ENCODE measurements at regions of chr11 and their contacts with region 1.

Region 1: DNA sequence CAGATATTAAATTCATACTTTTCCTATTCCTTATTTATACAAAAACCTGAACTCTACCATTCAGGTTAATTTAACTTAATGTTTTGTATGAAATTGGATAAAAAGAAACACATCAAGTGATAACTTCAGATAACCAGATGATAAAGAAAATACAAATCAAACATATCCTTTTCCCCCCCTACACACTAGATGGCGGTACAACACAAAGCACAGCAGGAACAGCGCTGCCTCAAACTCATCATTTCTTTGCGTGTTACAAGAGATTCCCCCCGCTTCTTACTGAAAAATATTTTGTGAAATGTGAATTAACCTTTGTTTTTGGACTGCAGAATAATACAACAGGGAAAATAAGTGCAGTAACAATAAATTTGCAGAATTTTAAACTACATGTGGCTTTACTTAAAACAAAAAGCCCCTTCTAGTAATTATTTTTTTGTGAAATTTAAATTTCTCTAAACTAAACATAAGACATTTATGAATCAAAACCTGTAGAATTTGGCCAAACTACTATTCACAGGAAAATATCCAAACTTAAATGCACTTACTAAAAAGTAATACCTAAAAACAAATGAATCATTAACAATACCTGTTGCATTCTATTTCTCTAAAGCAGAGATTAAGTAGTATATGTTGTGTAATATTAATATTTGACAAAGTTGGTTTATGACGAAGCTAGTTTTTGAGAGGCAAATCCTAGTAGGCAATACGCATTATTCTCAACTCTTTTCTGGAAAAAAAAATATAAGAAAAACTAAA is 74.4 kb downstream of the ARHGAP32 start:
- DNase-seq: peak; percentile 73
- ATAC-seq: peak; percentile 86
- H3K4me3 ChIP-seq: no peak overlapping the region
- H3K27ac ChIP-seq: peak overlapping the region; percentile 71
- H3K4me1 ChIP-seq: peaks cover 41% of the 10 kb centered on the region
- H3K27me3 ChIP-seq: no peaks in the 10 kb centered on the region
- CTCF ChIP-seq: peak; percentile 90; the same call in 1 of the 2 replicates

Region 2: GRCh38 chr11:128884703-128885338 is 233.0 kb before region 1 on chr11:
- CTCF ChIA-PET with region 1: no interaction called
- POLR2A ChIA-PET with region 1: no interaction called
- in situ Hi-C with region 1: no loop called
- intact Hi-C with region 1: loop called (anchors 10 kb)
- DNase-seq: peak; percentile 69
- ATAC-seq: peak; percentile 90
- H3K4me3 ChIP-seq: no peak overlapping the region
- H3K27ac ChIP-seq: no peak overlapping the region
- H3K4me1 ChIP-seq: no peaks in the 10 kb centered on the region
- H3K27me3 ChIP-seq: peaks cover 25% of the 10 kb centered on the region
- CTCF ChIP-seq: peak; percentile 93

Region 3: GRCh38 chr11:129192156-129192555 is 74.4 kb after region 1 on chr11 and contains the start of gene ARHGAP32:
- CTCF ChIA-PET with region 1: no interaction called
- POLR2A ChIA-PET with region 1: no interaction called
- in situ Hi-C with region 1: no loop called
- intact Hi-C with region 1: loop called (anchors 5 kb)
- DNase-seq: peak; percentile 61
- ATAC-seq: peak; percentile 94
- H3K4me3 ChIP-seq: peak within 1 kb of the TSS; percentile 22 to 62
- H3K27ac ChIP-seq: peak within 1 kb of the TSS; percentile 93
- H3K4me1 ChIP-seq: peaks cover 47% of the 10 kb centered on the region
- H3K27me3 ChIP-seq: no peaks in the 10 kb centered on the region
- CTCF ChIP-seq: no peak
- total RNA-seq, gene ARHGAP32: 44.6 TPM

Region 4: DNA sequence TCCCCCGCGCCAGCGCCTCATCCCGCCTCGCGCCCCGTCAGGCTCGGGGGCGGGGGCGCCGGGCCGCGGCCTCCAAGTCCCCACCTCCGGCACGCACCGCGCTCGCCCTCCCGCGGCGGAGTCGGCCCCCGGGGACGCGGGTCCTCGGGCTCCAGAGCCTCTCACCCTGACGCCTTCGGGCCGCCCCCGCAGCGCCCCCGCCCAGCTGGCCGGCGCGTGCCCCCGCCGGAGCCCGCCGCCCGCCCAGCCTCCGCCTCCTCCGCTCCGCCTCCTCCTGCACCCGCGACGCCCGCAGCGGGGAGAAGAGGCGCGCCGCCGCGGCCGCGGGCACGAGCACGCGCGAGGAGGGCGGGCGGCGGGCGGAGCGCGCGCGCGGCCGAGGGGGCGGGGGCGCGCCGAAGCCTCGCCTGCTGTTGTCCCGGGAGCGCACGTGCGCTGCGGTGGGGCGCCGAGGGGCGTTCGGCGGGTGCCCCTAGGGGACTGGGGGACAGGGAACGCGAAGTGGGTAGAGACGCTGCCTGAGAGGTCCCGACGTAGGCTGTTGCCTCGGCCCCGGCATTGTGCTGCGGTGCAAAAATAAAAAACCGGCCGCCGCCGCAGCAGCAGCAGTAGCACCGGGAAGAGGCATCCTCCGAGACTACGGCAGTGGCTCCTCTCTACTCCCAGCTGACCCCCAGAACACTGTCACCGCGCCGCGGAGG is 161.7 kb after region 1 on chr11:
- CTCF ChIA-PET with region 1: no interaction called
- POLR2A ChIA-PET with region 1: no interaction called
- in situ Hi-C with region 1: no loop called
- intact Hi-C with region 1: loop called (anchors 2 kb)
- DNase-seq: no peak
- ATAC-seq: peak; percentile 94
- H3K4me3 ChIP-seq: peak overlapping the region; percentile 72 to 85
- H3K27ac ChIP-seq: peak overlapping the region; percentile 93
- H3K4me1 ChIP-seq: peaks cover 48% of the 10 kb centered on the region
- H3K27me3 ChIP-seq: no peaks in the 10 kb centered on the region
- CTCF ChIP-seq: peak; percentile 68

Region 5: GRCh38 chr11:129331871-129332274 is 214.1 kb after region 1 on chr11:
- CTCF ChIA-PET with region 1: interaction called, 6 read pairs
- POLR2A ChIA-PET with region 1: interaction called, 6 read pairs
- in situ Hi-C with region 1: no loop called
- intact Hi-C with region 1: loop called (anchors 2 kb)
- DNase-seq: peak; percentile 64
- ATAC-seq: peak; percentile 99
- H3K4me3 ChIP-seq: no peak overlapping the region
- H3K27ac ChIP-seq: peak overlapping the region; percentile 52; the same call in 1 of the 2 replicates
- H3K4me1 ChIP-seq: peaks cover 6% of the 10 kb centered on the region; the same call in 1 of the 2 replicates
- H3K27me3 ChIP-seq: no peaks in the 10 kb centered on the region
- CTCF ChIP-seq: peak; percentile 97

Region 6: GRCh38 chr11:129743111-129743815 is 625.5 kb after region 1 on chr11:
- CTCF ChIA-PET with region 1: no interaction called
- POLR2A ChIA-PET with region 1: no interaction called
- in situ Hi-C with region 1: no loop called
- intact Hi-C with region 1: loop called (anchors 10 kb)
- DNase-seq: no peak
- ATAC-seq: no peak; the same call in 1 of the 2 replicates
- H3K4me3 ChIP-seq: no peak overlapping the region
- H3K27ac ChIP-seq: no peak overlapping the region
- H3K4me1 ChIP-seq: no peaks in the 10 kb centered on the region
- H3K27me3 ChIP-seq: no peaks in the 10 kb centered on the region
- CTCF ChIP-seq: no peak